ENCODE measurements at regions of chr19 and their contacts with region 1.

Region 1: GRCh38 chr19:10251792-10252694 is at the start of gene MRPL4:
- DNase-seq: peak; percentile 88
- H3K4me3 Mint-ChIP-seq: peak within 1 kb of the TSS; percentile 94
- H3K27ac Mint-ChIP-seq: peak within 1 kb of the TSS; percentile 89
- H3K4me1 Mint-ChIP-seq: no peaks in the 10 kb centered on the region
- H3K27me3 Mint-ChIP-seq: no peaks in the 10 kb centered on the region
- CTCF ChIP-seq: no peak
- total RNA-seq, gene MRPL4: 59.2 and 60.4 TPM in 2 replicates

Region 2: DNA sequence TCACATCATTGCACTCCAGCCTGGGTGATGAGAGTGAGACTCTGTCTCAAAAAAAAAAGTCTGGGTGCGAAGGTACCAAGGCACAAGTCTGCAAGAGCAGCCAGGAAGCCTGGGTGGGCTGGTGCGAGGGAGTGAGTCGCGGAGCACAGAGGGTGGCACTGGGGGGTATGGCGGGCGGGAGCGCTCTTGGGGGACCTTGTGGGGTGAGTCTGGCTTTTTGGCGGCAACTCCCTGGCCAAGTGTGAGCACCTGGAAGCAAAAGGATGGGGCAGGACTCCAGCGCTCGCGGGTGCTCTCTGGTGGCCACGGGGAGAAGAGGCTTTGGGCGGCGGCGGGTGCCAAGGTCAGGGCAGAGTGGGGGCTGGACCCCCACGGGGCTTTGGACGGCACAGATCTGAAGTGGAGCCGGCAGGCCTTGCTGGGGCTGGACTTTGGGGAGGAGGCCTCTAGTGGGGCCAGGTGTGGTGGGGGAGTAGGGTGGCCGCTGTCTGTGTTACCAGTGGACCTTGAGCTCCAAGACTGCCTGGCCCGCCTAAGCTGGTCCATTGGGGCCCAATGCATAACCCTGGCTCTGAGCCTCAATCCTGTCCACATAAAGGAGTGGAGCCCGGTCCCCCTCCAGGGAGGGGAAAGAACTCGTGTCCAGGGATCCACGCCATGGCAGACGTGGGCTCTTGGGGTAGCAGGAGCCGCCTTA is 139.0 kb before region 1 on chr19:
- CTCF ChIA-PET with region 1: no interaction called
- intact Hi-C with region 1: no loop called
- DNase-seq: peak; percentile 69
- H3K4me3 Mint-ChIP-seq: no peak overlapping the region
- H3K27ac Mint-ChIP-seq: peak overlapping the region; percentile 69
- H3K4me1 Mint-ChIP-seq: peaks cover 11% of the 10 kb centered on the region
- H3K27me3 Mint-ChIP-seq: no peaks in the 10 kb centered on the region
- CTCF ChIP-seq: peak; percentile 35

Region 3: DNA sequence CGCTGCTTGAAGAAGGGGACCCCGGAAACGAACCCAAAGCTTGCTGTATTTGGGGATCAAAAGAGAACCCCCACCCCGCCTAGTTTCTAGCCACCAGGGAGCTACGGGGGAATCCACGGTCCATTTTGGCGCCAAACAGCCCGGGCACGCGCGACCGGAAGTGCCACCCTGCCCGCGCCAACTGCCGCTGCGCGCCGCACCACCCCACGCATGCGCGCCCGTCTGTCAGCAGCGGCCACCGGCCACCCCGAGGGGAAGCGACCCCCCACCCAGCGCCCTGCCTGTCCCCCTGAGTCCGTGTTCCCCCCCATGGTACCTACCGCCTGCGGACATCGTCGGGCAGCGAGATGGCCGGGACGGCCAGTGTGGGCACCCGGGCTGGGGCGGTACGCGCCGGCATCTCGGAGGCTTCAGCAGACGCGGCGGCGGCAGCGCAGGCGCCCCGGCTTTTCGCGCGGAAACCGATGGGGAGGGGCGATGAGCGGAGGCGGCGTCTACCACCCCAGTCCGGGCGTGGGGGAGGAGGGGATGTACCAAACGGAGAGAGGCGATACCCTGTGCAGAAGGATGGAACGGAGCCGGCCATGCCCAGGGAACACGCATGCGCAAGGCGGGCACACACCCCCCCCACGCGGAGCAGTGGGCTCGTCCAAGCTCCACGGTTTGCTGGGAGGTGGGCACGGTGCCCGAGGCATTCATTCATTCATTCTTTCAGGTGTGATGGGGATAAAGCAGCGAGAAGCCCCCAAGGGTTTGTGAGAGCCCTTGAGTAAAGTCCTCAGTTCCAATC is 57.3 kb before region 1 on chr19 and contains the start of gene DNMT1:
- CTCF ChIA-PET with region 1: no interaction called
- intact Hi-C with region 1: loop called (anchors 5 kb)
- DNase-seq: peak; percentile 96
- H3K4me3 Mint-ChIP-seq: peak within 1 kb of the TSS; percentile 86
- H3K27ac Mint-ChIP-seq: peak within 1 kb of the TSS; percentile 68
- H3K4me1 Mint-ChIP-seq: no peaks in the 10 kb centered on the region
- H3K27me3 Mint-ChIP-seq: no peaks in the 10 kb centered on the region
- CTCF ChIP-seq: no peak
- total RNA-seq, gene DNMT1: 133 and 139 TPM in 2 replicates

Measured in Calu3 (cell line).